Prostate gland (tissue), 2 donors: ENCODE measurements at regions of chr22 and their contacts with region 1.

Region 1: DNA sequence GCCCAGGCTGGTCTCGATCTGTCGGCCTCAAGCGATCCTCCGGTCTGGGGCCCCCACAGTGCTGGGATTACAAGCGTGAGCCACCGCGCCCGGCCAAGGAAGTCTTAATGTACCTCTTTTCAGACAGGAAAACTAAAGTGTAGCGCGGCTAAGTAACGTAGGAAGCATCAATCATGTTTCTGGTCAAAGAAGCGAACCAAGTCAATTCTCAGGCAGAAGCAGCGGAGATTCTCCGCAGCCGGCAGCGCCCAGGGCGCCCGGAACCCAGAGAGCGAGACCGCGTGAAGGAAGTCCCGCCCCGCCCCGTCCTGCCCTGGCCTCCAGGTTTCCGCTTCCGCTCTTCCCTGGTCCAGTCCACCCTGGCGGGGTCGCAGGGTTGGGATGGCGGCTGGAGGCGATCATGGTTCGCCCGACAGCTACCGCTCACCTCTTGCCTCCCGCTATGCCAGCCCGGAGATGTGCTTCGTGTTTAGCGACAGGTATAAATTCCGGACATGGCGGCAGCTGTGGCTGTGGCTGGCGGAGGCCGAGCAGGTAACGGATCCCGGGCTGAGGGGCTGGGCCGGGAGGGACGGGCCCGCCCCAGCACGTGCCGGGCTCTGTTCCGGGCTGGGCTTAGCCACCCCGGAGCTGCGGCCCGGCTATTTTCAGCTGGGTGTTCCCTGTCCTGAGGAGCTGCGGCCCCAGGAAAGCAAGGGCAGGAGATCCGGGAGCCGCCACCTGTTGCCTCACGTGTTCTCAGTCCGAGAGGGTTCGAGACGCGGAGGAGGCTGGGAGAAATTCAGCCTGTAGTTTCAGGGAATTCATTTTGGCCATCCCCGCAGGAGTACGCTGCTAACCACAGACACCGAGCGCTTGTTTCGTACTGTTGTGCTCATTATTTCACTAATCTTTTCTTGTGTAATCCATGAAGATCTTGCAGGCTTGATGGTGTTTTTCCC is at the start of gene ADSL:
- DNase-seq: peak; percentile 87
- H3K4me3 ChIP-seq: peak within 1 kb of the TSS; percentile 67 to 88
- H3K27ac ChIP-seq: peak within 1 kb of the TSS; percentile 82 to 87
- H3K4me1 ChIP-seq: peaks cover 4% of the 10 kb centered on the region
- H3K27me3 ChIP-seq: no peaks in the 10 kb centered on the region
- CTCF ChIP-seq: peak in 2 of 4 experiments; percentile 15 to 20
- POLR2A ChIP-seq: peak; percentile 46
- total RNA-seq, gene ADSL: 63.9 to 64.5 TPM

Region 2: DNA sequence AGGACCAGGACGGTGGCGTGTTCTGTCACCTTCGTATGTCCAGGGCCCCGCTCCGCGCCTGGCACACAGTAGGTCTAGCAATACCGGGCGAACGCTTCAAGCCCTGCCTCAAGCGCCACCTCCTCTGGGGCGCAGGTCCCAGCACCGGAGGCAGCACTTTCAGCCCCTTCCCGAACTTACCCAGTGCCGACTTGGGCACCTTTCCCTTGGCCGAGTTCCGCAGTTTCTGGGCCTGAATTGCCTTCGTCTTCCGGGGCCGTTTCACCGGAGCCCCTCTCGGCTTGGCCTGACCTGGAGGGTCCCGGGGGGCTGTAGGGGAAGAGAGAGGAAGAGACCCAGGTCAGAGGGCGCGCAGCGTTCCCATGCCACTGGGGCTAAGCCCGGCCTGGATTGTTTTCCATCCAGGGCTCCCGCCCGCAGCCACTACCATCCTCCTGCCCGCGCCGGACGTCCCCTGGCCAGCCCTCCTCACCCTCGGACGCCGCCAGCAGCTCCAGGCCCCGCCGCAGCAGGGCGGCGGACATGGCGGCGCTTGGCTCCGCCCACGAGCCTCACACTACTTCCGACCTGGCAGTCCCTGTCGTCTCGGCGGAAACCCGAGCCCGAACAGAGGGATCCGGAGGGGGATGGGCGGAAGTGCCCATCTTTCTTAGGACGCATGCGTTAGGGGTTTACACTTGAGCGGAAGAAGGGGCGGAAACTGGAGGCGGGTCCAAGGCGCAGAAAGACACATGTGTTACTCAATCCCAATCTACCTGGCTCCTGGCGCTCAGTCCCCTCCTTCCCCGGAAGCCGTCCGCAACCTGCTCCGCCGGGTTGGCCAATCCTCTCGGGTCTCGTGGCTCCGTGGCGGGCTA is 814.0 kb before region 1 on chr22 and contains the start of gene RPS19BP1:
- intact Hi-C with region 1: loop called (anchors 10 kb)
- DNase-seq: peak; percentile 100
- H3K4me3 ChIP-seq: peak within 1 kb of the TSS; percentile 63 to 94
- H3K27ac ChIP-seq: peak within 1 kb of the TSS; percentile 85 to 90
- H3K4me1 ChIP-seq: peaks cover 34% of the 10 kb centered on the region
- H3K27me3 ChIP-seq: no peaks in the 10 kb centered on the region
- CTCF ChIP-seq: peak in 1 of 4 experiments; percentile 20
- POLR2A ChIP-seq: peak; percentile 87
- total RNA-seq, gene RPS19BP1: 186 to 264 TPM

Region 3: GRCh38 chr22:40024201-40025061 is 322.0 kb before region 1 on chr22:
- intact Hi-C with region 1: loop called (anchors 5 kb)
- DNase-seq: peak; percentile 69
- H3K4me3 ChIP-seq: no peak overlapping the region
- H3K27ac ChIP-seq: no peak overlapping the region
- H3K4me1 ChIP-seq: peaks cover 22% of the 10 kb centered on the region
- H3K27me3 ChIP-seq: no peaks in the 10 kb centered on the region
- CTCF ChIP-seq: peak; percentile 73 to 91 (median 86)
- POLR2A ChIP-seq: no peak

Region 4: GRCh38 chr22:40044102-40044869 is 302.2 kb before region 1 on chr22:
- intact Hi-C with region 1: loop called (anchors 1 kb)
- DNase-seq: peak; percentile 99
- H3K4me3 ChIP-seq: peak overlapping the region; percentile 61 to 81
- H3K27ac ChIP-seq: peak overlapping the region; percentile 91 to 92
- H3K4me1 ChIP-seq: peaks cover 15% of the 10 kb centered on the region
- H3K27me3 ChIP-seq: no peaks in the 10 kb centered on the region
- CTCF ChIP-seq: peak in 1 of 4 experiments; percentile 15
- POLR2A ChIP-seq: peak; percentile 51

Region 5: GRCh38 chr22:40177738-40178416 is 168.6 kb before region 1 on chr22 and contains the start of gene TNRC6B:
- intact Hi-C with region 1: loop called (anchors 5 kb)
- DNase-seq: peak; percentile 92
- H3K4me3 ChIP-seq: peak within 1 kb of the TSS; percentile 48 to 50
- H3K27ac ChIP-seq: peak within 1 kb of the TSS; percentile 61 to 86
- H3K4me1 ChIP-seq: peaks cover 8% of the 10 kb centered on the region
- H3K27me3 ChIP-seq: no peaks in the 10 kb centered on the region
- CTCF ChIP-seq: peak in 1 of 4 experiments; percentile 14
- POLR2A ChIP-seq: peak; percentile 96
- total RNA-seq, gene TNRC6B: 43.8 to 118 TPM

Region 6: GRCh38 chr22:40276996-40277823 is 69.2 kb before region 1 on chr22:
- intact Hi-C with region 1: loop called (anchors 5 kb)
- DNase-seq: no peak
- H3K4me3 ChIP-seq: peak overlapping the region; percentile 18 to 24
- H3K27ac ChIP-seq: peak overlapping the region; percentile 84 to 87
- H3K4me1 ChIP-seq: peaks cover 4% of the 10 kb centered on the region
- H3K27me3 ChIP-seq: no peaks in the 10 kb centered on the region
- CTCF ChIP-seq: no peak
- POLR2A ChIP-seq: no peak